HepG2 (cell line): ENCODE measurements at regions of chr11 and their contacts with region 1.

Region 1: GRCh38 chr11:70397983-70398833 is at the start of gene CTTN:
- DNase-seq: peak; percentile 79
- ATAC-seq: peak; percentile 92
- H3K4me3 ChIP-seq: peak within 1 kb of the TSS; percentile 75 to 93 (median 90)
- H3K27ac ChIP-seq: peak within 1 kb of the TSS; percentile 71
- H3K4me1 ChIP-seq: peaks cover 48% of the 10 kb centered on the region
- H3K27me3 ChIP-seq: no peaks in the 10 kb centered on the region; a peak in 1 of 5 replicates
- CTCF ChIP-seq: no peak
- EP300 ChIP-seq: no peak
- POLR2A ChIP-seq: peak; percentile 62 to 90
- RAD21 ChIP-seq: peak; percentile 35; the same call in 1 of the 2 replicates
- total RNA-seq, gene CTTN: 83.4 and 114 TPM in 2 replicates

Region 2: DNA sequence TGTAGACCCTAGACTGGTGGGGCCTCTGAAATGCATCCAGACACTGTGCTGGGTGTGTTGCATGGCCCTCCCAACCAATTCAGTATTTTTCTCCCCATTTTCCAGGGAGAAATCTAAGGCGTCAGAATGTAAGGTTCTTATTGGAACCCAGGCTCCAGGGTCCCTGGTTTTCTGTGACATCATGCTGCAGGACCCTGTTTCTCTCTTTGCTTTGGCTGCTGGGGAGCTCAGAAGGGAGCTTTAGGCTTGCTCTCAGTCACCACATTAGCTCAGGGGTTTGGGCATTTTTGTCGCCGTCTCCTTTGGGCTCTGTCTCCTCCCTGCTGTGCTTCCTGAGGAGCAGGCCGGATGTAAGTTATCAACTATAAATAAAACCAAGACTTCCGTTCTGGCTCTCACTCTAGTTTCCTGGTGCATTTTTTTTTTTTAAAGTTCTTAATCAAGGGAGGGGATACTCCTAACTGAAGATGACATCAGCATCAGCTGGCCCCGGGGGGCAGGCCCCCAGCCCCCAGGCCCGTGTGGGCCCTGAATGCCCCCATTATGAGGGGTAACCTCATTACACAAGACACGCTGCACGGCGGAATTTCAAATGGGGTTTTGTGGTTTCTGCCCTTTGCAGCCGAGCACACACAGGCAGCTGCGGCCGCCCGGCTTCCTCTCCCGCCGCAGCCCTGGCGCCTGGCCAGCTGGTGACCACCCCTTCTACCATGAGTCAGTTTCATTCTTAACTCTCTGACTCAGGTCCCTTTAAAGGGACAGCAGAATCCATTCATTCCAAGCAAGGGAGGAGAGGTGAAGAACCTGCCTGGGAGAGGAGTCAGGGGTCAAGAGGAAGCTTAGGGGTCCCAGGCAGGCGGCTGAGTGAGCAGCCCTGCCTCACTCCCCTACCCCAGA is 1101.1 kb before region 1 on chr11:
- CTCF ChIA-PET with region 1: no interaction called
- POLR2A ChIA-PET with region 1: no interaction called
- in situ Hi-C with region 1: no loop called
- intact Hi-C with region 1: loop called (anchors 10 kb)
- DNase-seq: peak; percentile 89
- ATAC-seq: peak; percentile 63
- H3K4me3 ChIP-seq: peak overlapping the region in 2 of 3 experiments; percentile 18 to 60; a peak in 3 of 6 replicates
- H3K27ac ChIP-seq: peak overlapping the region; percentile 25
- H3K4me1 ChIP-seq: peaks cover 51% of the 10 kb centered on the region
- H3K27me3 ChIP-seq: no peaks in the 10 kb centered on the region
- CTCF ChIP-seq: no peak
- EP300 ChIP-seq: peak in 1 of 2 experiments; percentile 64; a peak in 1 of 4 replicates
- POLR2A ChIP-seq: no peak
- RAD21 ChIP-seq: no peak

Region 3: DNA sequence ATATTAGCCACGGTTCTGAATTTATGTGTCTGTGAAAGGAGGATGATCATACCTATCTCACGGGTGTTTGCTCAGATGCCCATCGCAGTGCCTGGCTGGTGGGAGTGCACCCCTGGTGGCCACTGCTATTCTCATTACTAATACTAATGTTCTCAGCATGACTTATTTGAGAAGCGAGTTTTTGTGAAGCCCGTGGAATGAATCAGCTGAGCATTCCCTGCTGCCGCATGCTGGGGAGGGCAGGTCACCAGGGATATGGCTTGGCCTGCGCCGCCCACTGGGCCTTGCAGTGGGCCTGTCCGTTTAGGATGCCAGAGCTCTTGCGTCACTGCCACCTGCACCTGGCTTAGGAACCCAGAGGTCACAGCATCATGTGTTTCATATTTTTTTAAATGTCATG is 17.0 kb after region 1 on chr11:
- CTCF ChIA-PET with region 1: no interaction called
- POLR2A ChIA-PET with region 1: no interaction called
- in situ Hi-C with region 1: no loop called
- intact Hi-C with region 1: no loop called
- DNase-seq: no peak
- ATAC-seq: peak; percentile 44
- H3K4me3 ChIP-seq: no peak overlapping the region
- H3K27ac ChIP-seq: no peak overlapping the region
- H3K4me1 ChIP-seq: no peaks in the 10 kb centered on the region
- H3K27me3 ChIP-seq: no peaks in the 10 kb centered on the region
- CTCF ChIP-seq: no peak
- EP300 ChIP-seq: no peak
- POLR2A ChIP-seq: no peak
- RAD21 ChIP-seq: no peak